ENCODE measurements at regions of chr5 and their contacts with region 1.

Region 1: DNA sequence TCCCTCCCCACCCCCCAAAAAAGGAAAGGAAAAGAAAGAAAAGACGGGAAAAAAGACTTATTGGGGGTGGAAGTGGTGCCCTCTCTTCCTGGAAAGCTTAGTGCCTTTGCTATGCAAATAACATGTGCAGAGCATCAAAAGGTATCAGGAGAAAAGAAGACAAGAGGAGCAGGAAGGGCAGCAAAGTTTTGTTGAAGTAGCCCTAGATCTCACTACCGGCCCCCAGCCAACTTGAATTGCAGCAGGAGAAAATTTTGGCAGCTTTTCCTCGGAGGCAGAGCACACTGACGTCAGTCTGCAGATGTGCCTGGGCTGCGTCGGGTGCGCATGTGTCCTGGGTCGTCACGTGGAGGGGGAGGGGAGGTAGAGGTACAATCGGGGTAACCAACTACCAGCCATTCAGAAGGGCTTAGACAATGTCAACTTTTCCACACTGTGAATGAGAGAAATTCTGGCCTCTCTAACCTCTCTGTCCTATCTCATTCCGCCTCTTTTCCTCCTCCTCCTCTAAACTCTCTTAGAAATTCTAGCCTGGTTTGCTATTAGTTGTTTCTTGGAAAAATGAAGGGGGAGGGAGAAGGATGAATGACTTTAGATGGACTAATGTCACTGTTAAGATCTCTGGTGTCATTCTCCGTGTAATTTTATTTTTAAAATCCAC is at the start of gene ADAMTS6:
- DNase-seq: peak; percentile 91 to 96 (median 95)
- ATAC-seq: peak; percentile 94 to 98 (median 96)
- H3K4me3 ChIP-seq: peak within 1 kb of the TSS; percentile 20 to 75 (median 64)
- H3K27ac ChIP-seq: peak within 1 kb of the TSS; percentile 77 to 94 (median 90)
- H3K4me1 ChIP-seq: peaks cover 0 to 27% (median 11%) of the 10 kb centered on the region in 12 donors
- H3K27me3 ChIP-seq: no peaks in the 10 kb centered on the region
- CTCF ChIP-seq: no peak
- POLR2A ChIP-seq: peak in 1 of 2 donors; percentile 66
- total RNA-seq, gene ADAMTS6: 1.5 to 4.3 (median 3.4) TPM

Region 2: DNA sequence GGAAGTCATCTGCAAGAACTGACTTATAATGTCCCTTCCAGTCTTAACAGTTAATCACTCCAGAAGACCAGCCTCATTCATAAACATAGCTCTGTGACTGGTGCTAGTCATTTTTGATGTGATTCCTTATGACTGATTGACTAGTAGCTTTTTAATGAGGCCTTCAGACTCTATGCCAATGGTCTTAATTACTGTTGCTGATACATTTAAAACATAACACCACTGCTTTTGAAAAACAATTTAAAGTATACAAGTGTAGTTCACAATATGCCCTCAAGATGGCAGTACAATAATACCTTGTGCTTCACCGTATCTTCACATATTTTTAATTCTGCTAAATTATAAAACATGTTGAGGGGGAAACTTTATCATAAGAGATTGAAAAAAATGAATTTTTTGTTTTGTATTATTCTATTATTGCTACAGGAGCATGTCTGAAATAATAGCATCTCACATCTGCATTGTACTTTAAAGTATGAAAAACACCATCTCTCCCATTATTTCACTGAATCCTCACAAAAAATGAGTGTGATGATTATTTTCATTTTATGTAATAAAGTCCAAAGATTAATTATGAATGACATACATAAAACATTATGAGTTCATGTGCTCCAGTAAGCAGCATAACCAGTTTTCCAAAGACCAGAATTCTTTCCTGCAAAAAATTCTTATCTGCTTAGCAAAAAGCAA is 846.6 kb before region 1 on chr5:
- intact Hi-C with region 1: loop called in 8 of 10 experiments (anchors 2 to 10 kb)
- DNase-seq: no peak
- ATAC-seq: no peak
- H3K4me3 ChIP-seq: no peak overlapping the region
- H3K27ac ChIP-seq: no peak overlapping the region
- H3K4me1 ChIP-seq: peaks cover 0 to 6% (median 0%) of the 10 kb centered on the region in 12 donors
- H3K27me3 ChIP-seq: peaks cover 0 to 10% (median 0%) of the 10 kb centered on the region in 9 donors
- CTCF ChIP-seq: peak; percentile 69 to 90 (median 82)
- POLR2A ChIP-seq: no peak

Region 3: GRCh38 chr5:64958757-64959391 is 522.9 kb before region 1 on chr5:
- intact Hi-C with region 1: loop called in 9 of 10 experiments (anchors 1 to 10 kb)
- DNase-seq: no peak
- ATAC-seq: no peak
- H3K4me3 ChIP-seq: no peak overlapping the region
- H3K27ac ChIP-seq: no peak overlapping the region
- H3K4me1 ChIP-seq: no peaks in the 10 kb centered on the region
- H3K27me3 ChIP-seq: no peaks in the 10 kb centered on the region
- CTCF ChIP-seq: peak; percentile 30 to 73 (median 59)
- POLR2A ChIP-seq: no peak

Region 4: DNA sequence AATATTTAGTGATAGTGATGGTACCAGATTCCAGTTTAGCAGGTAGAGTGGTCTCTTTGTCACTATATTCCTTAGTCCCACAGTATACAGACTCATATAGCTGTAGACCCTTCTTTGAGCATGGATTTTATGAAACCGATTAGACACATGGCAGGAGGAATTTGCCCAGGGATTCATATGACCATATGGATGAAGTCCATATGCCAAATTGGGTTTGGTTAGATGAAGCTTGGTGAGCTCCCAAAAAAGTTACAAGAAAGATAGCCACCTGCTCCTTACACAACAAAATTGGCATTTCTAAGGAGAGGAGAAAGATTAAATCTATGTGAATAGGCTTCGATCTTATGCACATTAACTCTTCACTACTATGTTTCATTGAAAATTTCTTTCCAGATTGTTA is 501.6 kb before region 1 on chr5:
- intact Hi-C with region 1: no loop called
- DNase-seq: no peak
- ATAC-seq: no peak
- H3K4me3 ChIP-seq: no peak overlapping the region
- H3K27ac ChIP-seq: no peak overlapping the region
- H3K4me1 ChIP-seq: peaks cover 0 to 4% (median 0%) of the 10 kb centered on the region in 12 donors
- H3K27me3 ChIP-seq: no peaks in the 10 kb centered on the region
- CTCF ChIP-seq: no peak
- POLR2A ChIP-seq: no peak

Region 5: DNA sequence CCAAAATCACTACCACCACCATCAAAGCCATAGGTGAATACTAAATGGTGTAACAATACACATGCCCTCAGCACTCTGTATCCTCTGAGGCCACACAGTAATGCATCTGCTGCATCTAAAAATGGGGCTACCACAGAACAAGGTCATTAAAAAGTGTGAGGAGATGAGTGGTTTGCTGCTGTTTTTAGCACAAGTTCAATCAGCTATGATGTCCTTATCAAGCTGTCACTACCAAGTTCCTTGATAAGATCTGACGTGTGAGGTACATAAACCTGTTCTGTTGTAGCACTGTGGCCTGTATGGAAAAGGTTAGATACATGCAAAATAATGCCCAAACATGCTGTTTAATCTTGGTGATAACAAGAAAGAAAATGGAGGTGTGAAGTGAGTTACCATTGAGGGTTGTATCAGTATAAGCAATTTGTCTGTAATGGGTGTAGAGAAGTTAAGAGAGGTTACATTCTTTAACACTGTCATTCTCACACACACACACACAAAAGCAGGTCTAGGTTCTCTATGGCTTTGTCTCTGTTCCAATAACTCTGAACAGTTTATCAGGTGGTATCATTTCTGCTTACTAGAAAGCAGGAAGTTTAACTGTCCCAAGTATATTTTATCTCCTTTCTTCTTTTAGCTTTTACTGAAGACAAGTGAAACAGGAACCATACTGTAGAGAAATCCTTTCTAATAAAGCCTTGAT is 460.1 kb before region 1 on chr5:
- intact Hi-C with region 1: loop called in 1 of 10 experiments (anchors 10 kb)
- DNase-seq: no peak
- ATAC-seq: peak; percentile 91 to 98 (median 92)
- H3K4me3 ChIP-seq: no peak overlapping the region
- H3K27ac ChIP-seq: peak overlapping the region in 4 of 12 donors; percentile 20 to 56 (median 49)
- H3K4me1 ChIP-seq: peaks cover 0 to 40% (median 8%) of the 10 kb centered on the region in 12 donors
- H3K27me3 ChIP-seq: no peaks in the 10 kb centered on the region
- CTCF ChIP-seq: no peak
- POLR2A ChIP-seq: no peak

Region 6: DNA sequence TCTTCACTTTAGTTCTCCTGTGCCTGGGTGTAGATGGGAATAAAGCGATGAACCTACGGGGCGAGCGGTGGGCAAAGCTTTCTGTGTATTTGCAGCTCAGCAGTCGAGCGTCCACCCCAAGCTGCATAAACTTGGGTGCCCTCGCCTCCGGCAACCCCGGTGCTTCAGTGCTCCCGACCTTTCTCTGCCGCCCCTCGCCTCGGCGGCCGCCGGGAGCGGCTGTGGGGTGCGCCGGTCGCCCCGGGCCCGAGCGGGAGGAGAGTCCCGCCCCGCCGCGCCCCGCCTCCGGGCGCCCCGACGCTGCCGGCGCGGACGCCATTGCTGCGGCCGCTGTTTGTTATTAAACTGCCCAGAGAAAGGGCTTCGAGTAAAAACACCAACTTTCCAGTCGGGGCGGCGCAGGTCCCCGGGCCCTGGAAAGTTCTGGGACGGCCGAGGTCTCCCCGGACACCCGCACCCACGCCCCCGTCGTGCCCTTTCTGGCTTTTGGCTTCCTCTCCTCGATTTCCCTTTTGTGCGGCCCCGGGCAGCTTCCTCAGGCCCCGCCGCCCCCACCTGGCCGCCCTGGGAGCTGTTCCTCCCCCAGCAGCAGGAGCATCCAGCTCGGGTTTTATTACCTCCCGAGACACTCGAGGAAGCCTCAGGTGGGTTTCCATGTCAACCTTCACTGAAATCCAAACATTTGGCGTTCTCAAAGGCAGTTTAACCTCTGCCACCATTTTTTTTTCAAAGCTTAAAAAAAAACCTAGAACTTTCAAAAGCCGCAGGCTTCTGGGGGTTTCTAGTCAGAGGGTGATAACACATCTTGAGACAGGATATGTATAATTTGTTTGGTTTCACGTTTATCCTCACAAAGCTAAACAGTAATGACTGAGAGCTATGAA is 378.7 kb before region 1 on chr5:
- intact Hi-C with region 1: loop called (anchors 1 to 5 kb)
- DNase-seq: peak; percentile 71 to 80 (median 75)
- ATAC-seq: peak; percentile 65 to 89 (median 88)
- H3K4me3 ChIP-seq: peak overlapping the region; percentile 35 to 89 (median 69)
- H3K27ac ChIP-seq: peak overlapping the region; percentile 75 to 94 (median 88)
- H3K4me1 ChIP-seq: peaks cover 0 to 22% (median 8%) of the 10 kb centered on the region in 12 donors
- H3K27me3 ChIP-seq: no peaks in the 10 kb centered on the region
- CTCF ChIP-seq: peak; percentile 17 to 65 (median 46)
- POLR2A ChIP-seq: peak in 1 of 2 donors; percentile 24

Region 7: GRCh38 chr5:65364907-65365306 is 116.9 kb before region 1 on chr5:
- intact Hi-C with region 1: loop called in 2 of 10 experiments (anchors 10 kb)
- DNase-seq: no peak
- ATAC-seq: no peak
- H3K4me3 ChIP-seq: peak overlapping the region in 5 of 12 donors; percentile 4 to 30 (median 22)
- H3K27ac ChIP-seq: peak overlapping the region in 9 of 12 donors; percentile 14 to 75 (median 61)
- H3K4me1 ChIP-seq: peaks cover 0 to 30% (median 5%) of the 10 kb centered on the region in 12 donors
- H3K27me3 ChIP-seq: no peaks in the 10 kb centered on the region
- CTCF ChIP-seq: no peak
- POLR2A ChIP-seq: no peak

Region 8: GRCh38 chr5:65672796-65673195 is 191.0 kb after region 1 on chr5:
- intact Hi-C with region 1: no loop called
- DNase-seq: no peak
- ATAC-seq: no peak
- H3K4me3 ChIP-seq: no peak overlapping the region
- H3K27ac ChIP-seq: no peak overlapping the region
- H3K4me1 ChIP-seq: no peaks in the 10 kb centered on the region
- H3K27me3 ChIP-seq: no peaks in the 10 kb centered on the region
- CTCF ChIP-seq: no peak
- POLR2A ChIP-seq: no peak

Region 9: DNA sequence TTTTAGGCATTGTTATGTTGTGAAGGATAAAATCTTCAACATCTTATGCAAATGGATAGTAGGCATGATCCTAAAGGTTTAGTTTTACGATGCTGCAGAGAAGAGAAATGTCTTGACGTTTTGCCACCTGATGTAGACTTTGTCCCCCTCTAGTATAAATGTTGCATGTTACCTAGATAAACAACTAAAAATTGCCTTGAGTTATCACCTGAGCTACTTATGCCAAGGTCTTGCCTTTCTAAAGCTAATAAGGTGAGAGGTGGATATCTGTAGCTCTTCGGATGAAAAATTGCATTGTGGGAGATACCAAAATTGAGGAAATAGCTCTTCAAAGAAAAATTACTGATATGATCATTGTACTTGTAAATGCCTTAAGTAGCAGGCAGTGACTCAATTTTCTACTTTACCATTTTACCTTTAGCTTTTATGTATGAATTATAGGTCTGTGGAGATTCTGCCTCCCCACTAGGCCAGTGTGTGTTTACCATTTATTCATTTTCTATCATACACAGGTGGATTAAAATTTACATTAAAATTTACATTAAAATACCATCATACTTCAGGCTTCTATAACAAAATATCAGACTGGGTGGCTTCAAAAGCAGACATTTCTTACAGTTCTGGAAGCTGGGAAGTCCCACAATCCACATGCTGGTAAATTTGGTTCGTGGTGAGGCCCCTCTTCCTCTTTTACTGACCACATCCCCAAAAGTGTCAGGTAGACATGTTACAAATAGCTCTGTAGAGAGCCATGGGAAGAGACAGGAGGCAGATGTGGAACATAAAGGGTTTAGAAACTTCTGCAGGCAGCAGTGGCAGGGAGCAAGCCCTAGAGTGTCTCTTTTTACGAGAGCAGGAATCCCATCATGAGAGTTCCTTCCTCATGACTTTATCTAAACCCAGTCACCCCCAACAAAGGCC is 343.9 kb after region 1 on chr5:
- intact Hi-C with region 1: no loop called
- DNase-seq: no peak
- ATAC-seq: no peak
- H3K4me3 ChIP-seq: no peak overlapping the region
- H3K27ac ChIP-seq: no peak overlapping the region
- H3K4me1 ChIP-seq: peaks cover 0 to 7% (median 0%) of the 10 kb centered on the region in 12 donors
- H3K27me3 ChIP-seq: no peaks in the 10 kb centered on the region
- CTCF ChIP-seq: no peak
- POLR2A ChIP-seq: no peak

Measured in heart left ventricle (tissue), 16 donors.